Esophagus muscularis mucosa (tissue), 4 donors: ENCODE measurements at regions of chr11 and their contacts with region 1.

Region 1: GRCh38 chr11:901452-902061 is 9.1 kb downstream of the CHID1 start:
- DNase-seq: no peak
- H3K4me3 ChIP-seq: no peak overlapping the region
- H3K27ac ChIP-seq: no peak overlapping the region
- H3K4me1 ChIP-seq: peaks cover 0 to 15% (median 9%) of the 10 kb centered on the region in 4 donors
- H3K27me3 ChIP-seq: no peaks in the 10 kb centered on the region
- CTCF ChIP-seq: no peak
- EP300 ChIP-seq: no peak
- POLR2A ChIP-seq: no peak

Region 2: GRCh38 chr11:832321-833113 is 69.0 kb before region 1 on chr11 and contains the start of gene CD151:
- intact Hi-C with region 1: no loop called
- DNase-seq: no peak
- H3K4me3 ChIP-seq: peak within 1 kb of the TSS; percentile 78 to 94 (median 84)
- H3K27ac ChIP-seq: peak within 1 kb of the TSS; percentile 88 to 93 (median 90)
- H3K4me1 ChIP-seq: peaks cover 86 to 96% (median 94%) of the 10 kb centered on the region in 4 donors
- H3K27me3 ChIP-seq: peaks cover 0 to 50% (median 38%) of the 10 kb centered on the region in 4 donors
- CTCF ChIP-seq: peak in 1 of 3 experiments; percentile 41
- EP300 ChIP-seq: no peak
- POLR2A ChIP-seq: no peak
- total RNA-seq, gene CD151: 219 to 730 (median 352) TPM

Region 3: DNA sequence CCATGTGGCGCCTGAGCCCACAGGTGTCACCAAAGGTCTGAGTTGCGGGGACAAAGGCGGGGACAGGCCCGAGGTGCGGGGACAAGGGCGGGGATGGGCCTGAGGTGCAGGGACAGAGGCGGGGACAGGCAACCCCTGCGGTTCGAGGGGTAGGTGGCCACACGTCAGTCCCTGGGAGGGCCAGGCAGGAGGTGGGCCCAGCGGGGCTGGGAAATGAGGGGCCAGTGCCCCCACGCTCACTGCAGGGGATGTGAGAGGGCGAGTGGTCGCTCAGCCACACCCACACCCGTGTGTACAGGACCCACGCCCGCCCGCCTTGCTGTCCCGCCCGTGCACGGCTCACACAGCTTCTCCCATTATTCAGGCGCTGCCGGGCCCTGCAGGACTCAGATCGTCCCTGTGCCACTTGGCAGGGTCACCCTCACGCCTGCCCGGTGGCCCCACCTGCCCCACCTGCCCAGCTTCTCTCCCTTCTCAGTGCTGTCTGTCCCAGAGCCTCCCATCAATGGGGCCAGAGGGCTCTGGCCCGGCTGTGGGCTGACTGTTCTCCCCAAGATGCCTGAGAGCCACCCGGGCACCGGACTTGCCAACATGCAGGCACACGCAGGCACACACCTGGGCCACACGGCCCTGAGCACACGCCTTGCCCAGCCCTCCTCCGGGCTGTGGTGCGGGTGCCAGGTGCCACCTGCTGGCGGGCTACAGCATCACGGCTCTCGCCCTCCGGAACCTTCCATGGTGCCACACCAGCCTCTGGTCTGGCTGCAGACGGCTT is 149.2 kb after region 1 on chr11:
- intact Hi-C with region 1: loop called (anchors 5 kb)
- DNase-seq: no peak
- H3K4me3 ChIP-seq: no peak overlapping the region
- H3K27ac ChIP-seq: no peak overlapping the region
- H3K4me1 ChIP-seq: peaks cover 0 to 10% (median 0%) of the 10 kb centered on the region in 4 donors
- H3K27me3 ChIP-seq: peaks cover 0 to 86% (median 16%) of the 10 kb centered on the region in 4 donors
- CTCF ChIP-seq: peak; percentile 67 to 84 (median 83)
- EP300 ChIP-seq: no peak
- POLR2A ChIP-seq: no peak